PC-3 (cell line): ENCODE measurements at regions of chr7 and their contacts with region 1.

Region 1: DNA sequence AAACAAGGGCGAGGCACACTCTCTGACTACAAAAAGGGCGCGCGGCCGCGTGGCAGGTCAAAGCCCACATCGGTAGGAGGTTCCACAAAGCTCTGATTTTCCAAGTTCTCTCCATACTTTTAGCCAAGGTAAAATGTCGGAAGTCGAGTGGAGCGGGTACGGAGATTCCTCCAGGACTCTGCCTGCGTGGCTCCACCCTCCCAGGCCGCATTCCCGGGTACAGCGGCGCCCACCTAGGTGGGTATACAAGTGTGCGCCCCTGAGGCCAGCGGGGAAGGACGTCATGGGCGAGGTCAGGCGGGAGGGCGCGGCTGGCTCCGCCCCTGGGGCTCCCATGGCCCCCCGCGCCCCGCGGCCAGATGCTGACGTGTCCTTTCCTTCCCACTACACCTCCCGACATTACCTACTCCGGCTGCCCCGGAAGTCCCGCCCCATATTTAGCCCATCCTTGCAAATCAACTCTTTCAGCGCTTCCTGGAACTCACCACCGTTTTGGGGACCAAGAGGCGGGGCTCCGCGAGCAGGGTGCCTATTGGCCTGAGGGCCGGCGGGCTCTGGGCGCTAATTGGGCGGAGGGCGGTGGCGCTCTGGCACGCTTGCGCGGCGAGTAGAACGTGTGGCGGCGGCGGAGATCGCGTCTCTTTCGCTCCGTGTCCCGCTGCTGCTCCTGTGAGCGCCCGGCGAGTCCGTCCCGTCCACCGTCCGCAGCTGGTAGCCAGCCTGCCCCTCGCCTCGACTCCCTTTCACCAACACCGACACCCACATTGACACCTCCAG is at the start of gene SND1:
- DNase-seq: peak; percentile 97
- ATAC-seq: peak; percentile 96
- H3K4me3 ChIP-seq: peak within 1 kb of the TSS; percentile 96
- H3K27ac ChIP-seq: peak within 1 kb of the TSS; percentile 62
- H3K4me1 ChIP-seq: peaks cover 30% of the 10 kb centered on the region
- H3K27me3 ChIP-seq: no peaks in the 10 kb centered on the region
- CTCF ChIP-seq: no peak
- total RNA-seq, gene SND1: 139 and 158 TPM in 2 replicates

Region 2: GRCh38 chr7:127413962-127414361 is 237.8 kb before region 1 on chr7:
- CTCF ChIA-PET with region 1: no interaction called
- POLR2A ChIA-PET with region 1: no interaction called
- intact Hi-C with region 1: no loop called
- DNase-seq: no peak
- ATAC-seq: no peak
- H3K4me3 ChIP-seq: no peak overlapping the region
- H3K27ac ChIP-seq: no peak overlapping the region
- H3K4me1 ChIP-seq: no peaks in the 10 kb centered on the region
- H3K27me3 ChIP-seq: no peaks in the 10 kb centered on the region
- CTCF ChIP-seq: no peak

Region 3: DNA sequence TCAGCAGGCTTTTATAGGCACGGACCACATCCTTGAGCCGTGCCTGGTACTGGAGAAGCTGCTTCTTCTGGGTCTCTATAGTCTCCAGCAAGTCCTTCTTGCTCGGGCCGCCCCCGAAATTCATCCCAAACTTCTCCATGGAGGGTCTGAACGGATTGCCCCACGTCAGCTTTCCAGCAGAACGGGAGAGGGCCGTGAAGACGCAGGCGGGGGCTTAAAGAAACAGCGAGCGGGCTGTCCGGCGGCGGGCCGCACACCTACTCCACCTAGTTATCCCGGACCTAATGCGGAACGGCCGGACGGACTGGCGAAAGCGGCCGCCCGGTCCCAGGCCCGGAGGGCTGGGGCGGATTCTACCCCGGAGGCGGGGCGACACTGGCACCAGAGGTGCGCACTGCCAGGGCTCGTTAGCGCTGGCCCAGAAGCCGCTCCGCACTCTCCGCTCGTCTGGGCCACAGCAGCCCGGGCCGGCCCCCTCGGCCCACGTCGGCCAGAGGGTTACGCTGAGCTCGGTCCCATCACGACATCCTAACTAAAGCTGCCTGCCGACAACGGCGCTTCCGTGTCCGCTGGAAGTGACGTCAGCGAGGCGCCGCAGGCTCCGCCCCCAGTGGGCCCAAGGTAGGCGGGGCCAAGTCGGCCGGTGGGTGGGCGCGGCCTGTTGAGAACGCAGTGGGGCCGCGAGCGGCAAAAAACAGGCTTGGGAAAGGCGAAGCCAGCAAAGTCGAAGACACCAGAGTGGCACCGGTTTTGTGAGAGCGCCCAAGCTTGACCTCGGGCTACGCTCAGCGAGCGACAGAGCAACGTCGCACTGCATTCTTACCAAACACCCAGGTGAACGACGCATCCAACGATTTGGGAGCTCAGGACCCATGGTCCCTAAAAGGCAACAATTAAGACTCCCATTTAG is 66.4 kb before region 1 on chr7 and contains the start of gene GCC1:
- CTCF ChIA-PET with region 1: no interaction called
- POLR2A ChIA-PET with region 1: no interaction called
- intact Hi-C with region 1: loop called (anchors 2 kb)
- DNase-seq: peak; percentile 90
- ATAC-seq: peak; percentile 67
- H3K4me3 ChIP-seq: peak within 1 kb of the TSS; percentile 90
- H3K27ac ChIP-seq: peak within 1 kb of the TSS; percentile 46
- H3K4me1 ChIP-seq: peaks cover 27% of the 10 kb centered on the region
- H3K27me3 ChIP-seq: no peaks in the 10 kb centered on the region
- CTCF ChIP-seq: no peak
- total RNA-seq, gene GCC1: 11.2 and 11.9 TPM in 2 replicates

Region 4: DNA sequence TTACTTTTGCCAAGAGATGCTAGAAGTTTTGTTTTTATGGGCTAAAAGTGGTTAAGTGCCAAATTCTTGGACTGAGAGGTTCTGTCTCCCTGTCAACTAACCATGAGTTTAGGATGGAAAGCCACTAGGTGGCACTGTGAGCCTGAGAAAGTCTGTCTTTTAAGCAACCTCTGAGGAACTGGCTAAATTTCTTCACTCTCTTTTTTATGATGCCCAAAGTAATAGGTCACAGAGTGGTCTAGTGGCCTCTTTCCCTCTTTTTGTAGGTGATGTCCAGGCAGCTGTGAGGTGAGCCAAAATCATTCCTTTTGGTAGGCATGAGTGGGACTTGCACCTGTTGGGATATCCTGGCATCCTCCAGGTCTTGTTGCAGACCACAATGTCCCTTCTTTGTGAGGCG is 57.0 kb after region 1 on chr7:
- CTCF ChIA-PET with region 1: no interaction called
- POLR2A ChIA-PET with region 1: no interaction called
- intact Hi-C with region 1: loop called (anchors 10 kb)
- DNase-seq: peak; percentile 80
- ATAC-seq: peak; percentile 53
- H3K4me3 ChIP-seq: no peak overlapping the region
- H3K27ac ChIP-seq: no peak overlapping the region
- H3K4me1 ChIP-seq: peaks cover 15% of the 10 kb centered on the region
- H3K27me3 ChIP-seq: no peaks in the 10 kb centered on the region
- CTCF ChIP-seq: peak; percentile 75